Activated naive CD4-positive, alpha-beta T cell treated with anti-CD3 and anti-CD28 coated beads for 36 hours (primary cell): ENCODE measurements at regions of chr9 and their contacts with region 1.

Region 1: DNA sequence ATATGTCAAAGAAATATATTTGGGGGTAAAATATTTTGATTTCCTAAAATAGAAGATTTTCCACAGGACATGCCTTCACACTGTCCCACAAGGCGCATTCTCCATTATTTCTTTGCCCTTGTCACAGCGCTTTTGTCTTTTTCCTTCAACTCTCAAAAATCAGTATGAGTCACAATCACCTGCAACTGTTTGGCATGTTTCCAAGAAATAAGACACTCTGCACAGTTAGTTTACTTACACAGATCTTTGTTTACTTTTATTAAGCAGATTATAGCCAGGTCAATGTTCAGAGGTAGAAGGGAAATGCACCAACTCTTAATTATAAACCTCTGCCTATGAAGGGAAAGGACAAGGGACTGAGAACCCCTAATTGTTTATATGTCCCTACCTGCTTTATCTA is 9.5 kb downstream of the CEMIP2 start:
- DNase-seq: no peak
- H3K4me3 Mint-ChIP-seq: no peak overlapping the region
- H3K27ac Mint-ChIP-seq: no peak overlapping the region
- H3K4me1 Mint-ChIP-seq: peaks cover 78% of the 10 kb centered on the region
- H3K27me3 Mint-ChIP-seq: no peaks in the 10 kb centered on the region

Region 2: DNA sequence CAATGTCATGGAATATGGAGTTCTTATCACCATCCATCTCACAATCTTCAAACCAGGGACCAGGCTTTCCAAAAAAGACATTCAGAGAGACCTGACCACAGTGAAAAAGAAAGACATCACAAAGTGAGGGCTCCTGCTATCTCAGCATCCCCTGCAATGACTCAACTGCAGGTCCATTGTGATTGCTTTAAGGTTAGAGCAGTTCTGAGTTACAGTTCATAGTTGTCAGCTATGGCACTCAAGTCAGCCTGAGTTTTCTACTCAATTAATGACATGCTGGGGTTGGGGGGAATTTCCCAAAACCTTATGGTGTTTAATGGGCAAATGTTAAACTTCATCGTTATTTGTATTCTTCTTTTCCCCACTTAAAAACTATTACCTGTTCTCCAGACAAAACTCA is 49.4 kb before region 1 on chr9:
- CTCF ChIA-PET with region 1: no interaction called
- intact Hi-C with region 1: loop called (anchors 1 kb)
- DNase-seq: peak; percentile 11
- H3K4me3 Mint-ChIP-seq: no peak overlapping the region
- H3K27ac Mint-ChIP-seq: peak overlapping the region; percentile 11
- H3K4me1 Mint-ChIP-seq: peaks cover 25% of the 10 kb centered on the region
- H3K27me3 Mint-ChIP-seq: no peaks in the 10 kb centered on the region

Region 3: DNA sequence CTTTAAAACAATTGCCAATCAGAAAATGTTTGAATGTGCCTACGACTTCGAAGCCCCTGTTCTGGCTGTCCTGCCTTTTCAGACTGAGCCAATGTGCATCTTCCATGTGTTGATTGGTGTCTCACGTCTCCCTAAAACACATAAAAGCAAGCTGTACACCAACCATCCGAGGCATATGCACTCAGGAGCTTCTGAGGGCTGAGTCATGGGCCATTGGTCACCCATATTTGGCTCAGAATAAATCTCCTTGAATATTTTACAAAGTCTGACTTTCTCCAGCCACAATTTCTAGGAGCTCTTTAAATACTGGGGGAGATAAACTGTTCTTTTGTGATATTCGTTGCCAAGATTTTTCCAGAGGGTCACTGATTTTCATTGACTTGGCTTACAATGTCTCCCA is 247.7 kb after region 1 on chr9:
- CTCF ChIA-PET with region 1: no interaction called
- intact Hi-C with region 1: no loop called
- DNase-seq: no peak
- H3K4me3 Mint-ChIP-seq: no peak overlapping the region
- H3K27ac Mint-ChIP-seq: no peak overlapping the region
- H3K4me1 Mint-ChIP-seq: no peaks in the 10 kb centered on the region
- H3K27me3 Mint-ChIP-seq: no peaks in the 10 kb centered on the region